IMR-90 (cell line): ENCODE measurements at regions of chr6 and their contacts with region 1.

Region 1: DNA sequence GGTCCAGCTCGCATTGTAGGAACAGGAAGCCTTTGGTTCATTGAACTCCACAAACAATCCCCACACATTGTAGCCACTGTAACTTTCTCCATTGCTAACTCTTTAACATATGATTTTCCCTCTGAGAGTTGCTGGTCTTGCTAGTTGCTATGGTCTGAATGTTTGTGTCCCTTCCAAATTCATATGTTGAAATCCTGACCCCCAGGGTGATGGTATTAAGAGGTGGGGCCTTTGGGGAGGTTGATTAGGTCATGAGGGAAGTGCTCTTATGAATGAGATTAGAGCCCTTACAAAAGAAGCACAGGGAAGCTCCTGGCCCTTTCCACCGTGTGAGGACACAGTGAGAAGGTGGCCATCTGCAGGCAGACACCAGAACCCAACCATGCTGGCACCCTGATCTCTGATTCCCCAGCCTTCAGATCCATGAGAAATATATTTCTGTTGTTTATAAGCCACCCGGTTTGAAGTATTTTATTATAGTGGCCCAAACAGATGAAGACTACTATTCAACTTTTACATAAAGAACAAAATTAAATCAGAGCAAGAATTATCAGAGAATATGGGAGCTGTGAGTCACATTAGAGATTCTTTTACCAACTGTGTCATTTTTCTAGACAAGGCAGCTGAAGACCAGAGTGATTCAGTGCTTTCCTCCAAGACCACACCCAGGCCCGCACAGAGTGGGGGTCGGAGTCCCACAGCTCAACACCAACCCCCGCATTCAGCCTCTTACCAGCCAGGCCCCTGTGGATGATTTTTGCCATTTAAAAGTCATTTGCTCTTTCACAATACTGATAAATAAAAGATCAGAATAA is 143.0 kb downstream of the SAMD5 start:
- DNase-seq: peak; percentile 51
- ATAC-seq: peak; percentile 38
- H3K4me3 ChIP-seq: no peak overlapping the region
- H3K27ac ChIP-seq: peak overlapping the region; percentile 21; the same call in 1 of the 2 replicates
- H3K4me1 ChIP-seq: peaks cover 17% of the 10 kb centered on the region
- H3K27me3 ChIP-seq: no peaks in the 10 kb centered on the region
- CTCF ChIP-seq: no peak
- POLR2A ChIP-seq: no peak
- RAD21 ChIP-seq: no peak

Region 2: DNA sequence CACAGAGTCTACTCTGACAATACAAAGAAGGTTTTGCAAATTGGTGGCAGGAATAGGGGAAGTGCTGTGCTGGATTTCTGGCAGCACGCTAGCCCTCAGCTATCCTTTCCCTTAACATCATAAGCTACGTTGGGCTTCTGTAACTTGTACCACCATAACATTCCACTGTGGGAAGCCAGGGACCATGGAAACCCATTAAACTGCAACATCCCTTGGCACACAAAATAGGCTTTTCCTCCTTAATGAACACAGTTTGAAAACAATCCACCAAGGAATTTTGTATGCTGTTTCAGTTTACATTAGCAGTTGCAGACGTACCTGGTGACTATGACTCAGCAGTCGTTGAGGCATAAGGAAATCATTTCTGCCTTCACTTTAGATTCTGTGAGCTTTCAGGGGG is 1311.7 kb before region 1 on chr6:
- CTCF ChIA-PET with region 1: no interaction called
- POLR2A ChIA-PET with region 1: no interaction called
- dilution Hi-C with region 1: no loop called
- in situ Hi-C with region 1: no loop called
- intact Hi-C with region 1: loop called (anchors 5 kb)
- DNase-seq: no peak
- ATAC-seq: no peak
- H3K4me3 ChIP-seq: no peak overlapping the region
- H3K27ac ChIP-seq: no peak overlapping the region
- H3K4me1 ChIP-seq: no peaks in the 10 kb centered on the region
- H3K27me3 ChIP-seq: no peaks in the 10 kb centered on the region
- CTCF ChIP-seq: no peak
- POLR2A ChIP-seq: no peak
- RAD21 ChIP-seq: no peak

Region 3: DNA sequence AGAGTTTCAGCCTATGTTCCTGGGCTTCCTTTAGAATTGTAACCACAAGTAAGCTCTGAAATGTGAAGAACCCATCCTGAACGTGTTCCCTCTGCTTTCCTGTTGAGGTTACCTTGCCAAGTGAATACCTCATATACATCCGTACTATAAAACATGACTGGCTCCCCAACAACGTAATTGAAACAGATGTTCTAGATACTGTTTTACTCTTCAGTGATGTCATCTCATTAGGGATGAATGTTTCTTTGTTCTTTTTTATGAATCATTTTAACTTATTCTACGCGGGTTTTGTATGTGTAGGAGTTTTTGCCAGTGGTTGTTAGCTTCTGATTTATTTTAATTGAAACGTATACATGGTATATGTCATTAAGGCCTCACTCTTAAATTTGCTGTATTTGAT is 23.8 kb after region 1 on chr6:
- CTCF ChIA-PET with region 1: no interaction called
- POLR2A ChIA-PET with region 1: no interaction called
- dilution Hi-C with region 1: no loop called
- in situ Hi-C with region 1: no loop called
- intact Hi-C with region 1: no loop called
- DNase-seq: peak; percentile 89
- ATAC-seq: no peak
- H3K4me3 ChIP-seq: no peak overlapping the region
- H3K27ac ChIP-seq: no peak overlapping the region
- H3K4me1 ChIP-seq: no peaks in the 10 kb centered on the region
- H3K27me3 ChIP-seq: no peaks in the 10 kb centered on the region
- CTCF ChIP-seq: no peak
- POLR2A ChIP-seq: no peak
- RAD21 ChIP-seq: no peak